K562 (cell line): ENCODE measurements at regions of chr6 and their contacts with region 1.

Region 1: DNA sequence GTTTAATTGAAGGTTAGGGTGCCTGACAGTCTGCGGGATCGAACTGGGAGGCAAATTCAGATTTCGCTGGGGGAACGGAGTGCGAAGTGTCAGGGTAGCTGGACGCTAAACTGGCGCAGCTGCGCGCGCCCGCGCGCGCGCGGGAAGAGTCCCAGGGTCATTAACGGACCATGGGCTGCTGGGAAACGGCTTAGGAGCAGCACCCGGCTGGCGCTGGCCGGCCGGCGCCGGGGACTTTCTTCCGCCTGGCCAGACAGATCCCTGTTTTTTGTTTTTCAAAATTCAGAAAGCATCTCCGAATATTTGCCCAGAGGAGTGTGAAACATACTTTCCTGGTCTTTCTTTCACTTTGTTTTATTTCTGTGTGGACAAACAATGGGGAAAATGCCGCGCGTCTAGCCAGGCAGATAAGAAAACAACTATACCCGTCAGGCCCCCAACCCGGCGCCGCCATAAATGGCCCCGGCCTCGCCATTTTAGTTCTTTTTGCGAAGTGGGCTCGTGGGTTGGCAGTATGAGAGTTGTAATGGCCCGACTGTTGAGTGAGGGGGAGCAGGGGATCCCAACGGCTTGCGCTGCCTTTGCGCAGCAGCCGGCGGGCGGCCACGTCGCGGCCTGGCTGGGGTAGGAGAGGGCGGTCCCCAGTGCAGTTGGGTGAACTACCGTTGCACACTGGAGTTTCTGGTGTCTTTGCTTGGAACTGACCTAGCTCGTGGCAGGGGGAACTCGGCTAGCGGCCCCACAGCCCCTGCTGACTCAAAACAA is 7.1 kb downstream of the HSPA1B start:
- DNase-seq: peak; percentile 88 to 99 (median 94)
- ATAC-seq: peak; percentile 79
- H3K4me3 ChIP-seq: peak overlapping the region; percentile 85
- H3K27ac ChIP-seq: peak overlapping the region; percentile 88
- H3K4me1 ChIP-seq: peaks cover 41 to 55% of the 10 kb centered on the region in 2 experiments
- H3K27me3 ChIP-seq: no peaks in the 10 kb centered on the region
- CTCF ChIP-seq: peak in 1 of 3 experiments; percentile 20; a peak in 1 of 6 replicates
- EP300 ChIP-seq: peak; percentile 83
- POLR2A ChIP-seq: peak; percentile 100
- RAD21 ChIP-seq: peak; percentile 1 to 33; a peak in 2 of 4 replicates

Region 2: GRCh38 chr6:31702819-31703522 is 131.6 kb before region 1 on chr6 and contains the start of gene ABHD16A:
- CTCF ChIA-PET with region 1: no interaction called
- POLR2A ChIA-PET with region 1: interaction called, 10 read pairs
- in situ Hi-C with region 1: no loop called
- intact Hi-C with region 1: no loop called
- DNase-seq: peak; percentile 100
- ATAC-seq: peak; percentile 95
- H3K4me3 ChIP-seq: peak within 1 kb of the TSS; percentile 68
- H3K27ac ChIP-seq: peak within 1 kb of the TSS; percentile 93
- H3K4me1 ChIP-seq: peaks cover 22 to 34% of the 10 kb centered on the region in 2 experiments
- H3K27me3 ChIP-seq: no peaks in the 10 kb centered on the region
- CTCF ChIP-seq: peak in 2 of 3 experiments; percentile 14 to 17; a peak in 1 of 6 replicates
- EP300 ChIP-seq: peak; percentile 73
- POLR2A ChIP-seq: peak; percentile 98
- RAD21 ChIP-seq: peak in 1 of 2 experiments; percentile 21; a peak in 1 of 4 replicates
- polyA plus RNA-seq, gene ABHD16A: 25.8 to 49.7 TPM

Region 3: GRCh38 chr6:31795616-31796298 is 38.9 kb before region 1 on chr6 and contains the start of gene VARS1:
- CTCF ChIA-PET with region 1: interaction called, 24 read pairs
- POLR2A ChIA-PET with region 1: interaction called, 13 read pairs
- in situ Hi-C with region 1: no loop called
- intact Hi-C with region 1: loop called (anchors 1 kb)
- DNase-seq: peak; percentile 99 to 100 (median 100)
- ATAC-seq: peak; percentile 92
- H3K4me3 ChIP-seq: peak within 1 kb of the TSS; percentile 61
- H3K27ac ChIP-seq: peak within 1 kb of the TSS; percentile 97
- H3K4me1 ChIP-seq: peaks cover 17 to 44% of the 10 kb centered on the region in 2 experiments
- H3K27me3 ChIP-seq: no peaks in the 10 kb centered on the region
- CTCF ChIP-seq: peak; percentile 99 to 100 (median 100)
- EP300 ChIP-seq: peak; percentile 59; the same call in 1 of the 2 replicates
- POLR2A ChIP-seq: peak; percentile 38; the same call in 1 of the 2 replicates
- RAD21 ChIP-seq: peak; percentile 99 to 100
- polyA plus RNA-seq, gene VARS1: 2.9 to 10.4 TPM

Region 4: DNA sequence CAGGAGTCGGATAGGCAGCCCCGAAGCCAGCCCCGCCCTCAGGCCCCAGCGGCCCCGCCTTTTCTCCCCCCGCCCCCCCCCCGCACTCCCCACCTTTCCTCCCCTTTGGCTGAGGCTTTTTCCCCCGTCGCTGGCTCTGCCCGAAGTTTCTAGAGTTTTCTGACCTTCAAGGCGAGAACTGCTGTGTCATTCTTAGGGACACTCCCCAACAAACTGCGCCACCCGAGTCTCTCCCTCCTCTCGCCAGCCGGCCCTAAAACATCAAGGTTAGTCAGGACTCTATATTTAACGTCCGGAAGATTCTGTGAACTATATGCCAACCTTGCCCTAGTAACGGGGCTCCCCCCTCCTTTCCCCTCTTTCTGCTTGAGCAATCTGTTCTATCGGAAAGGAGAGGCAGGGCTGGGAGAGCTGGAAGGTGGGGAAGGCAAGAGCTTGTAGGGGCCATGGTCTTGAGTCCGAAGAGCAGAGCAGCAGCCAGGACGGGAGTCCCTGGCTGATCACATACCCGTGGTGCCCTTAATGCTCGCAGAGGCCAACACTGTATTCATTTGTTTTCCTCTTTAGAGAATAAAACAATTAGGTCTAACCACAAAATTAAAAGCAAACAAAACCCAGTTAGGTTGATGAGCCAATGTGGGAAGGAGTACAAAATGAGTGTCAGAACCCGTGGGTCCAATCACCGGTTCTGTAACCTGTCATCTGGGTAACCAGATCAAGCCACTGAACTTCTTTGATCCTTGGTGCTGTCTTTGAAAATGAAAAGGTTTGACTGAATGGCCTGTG is 12.4 kb before region 1 on chr6:
- CTCF ChIA-PET with region 1: no interaction called
- POLR2A ChIA-PET with region 1: interaction called, 50 read pairs
- in situ Hi-C with region 1: no loop called
- intact Hi-C with region 1: no loop called
- DNase-seq: peak; percentile 95 to 100 (median 96)
- ATAC-seq: peak; percentile 77
- H3K4me3 ChIP-seq: peak overlapping the region; percentile 59
- H3K27ac ChIP-seq: peak overlapping the region; percentile 99
- H3K4me1 ChIP-seq: peaks cover 51 to 58% of the 10 kb centered on the region in 2 experiments
- H3K27me3 ChIP-seq: no peaks in the 10 kb centered on the region
- CTCF ChIP-seq: no peak; a peak in 1 of 6 replicates
- EP300 ChIP-seq: peak; percentile 77
- POLR2A ChIP-seq: peak; percentile 91
- RAD21 ChIP-seq: no peak; a peak in 1 of 4 replicates

Region 5: GRCh38 chr6:31901953-31902643 is 67.5 kb after region 1 on chr6 and contains the start of gene ZBTB12:
- CTCF ChIA-PET with region 1: no interaction called
- POLR2A ChIA-PET with region 1: interaction called, 10 read pairs
- in situ Hi-C with region 1: no loop called
- intact Hi-C with region 1: no loop called
- DNase-seq: peak; percentile 98
- ATAC-seq: peak; percentile 84
- H3K4me3 ChIP-seq: peak within 1 kb of the TSS; percentile 75
- H3K27ac ChIP-seq: peak within 1 kb of the TSS; percentile 84
- H3K4me1 ChIP-seq: peaks cover 31 to 36% of the 10 kb centered on the region in 2 experiments; a peak in 4 of 5 replicates
- H3K27me3 ChIP-seq: no peaks in the 10 kb centered on the region
- CTCF ChIP-seq: peak in 1 of 3 experiments; percentile 15; a peak in 1 of 6 replicates
- EP300 ChIP-seq: no peak
- POLR2A ChIP-seq: peak; percentile 72
- RAD21 ChIP-seq: peak; percentile 41 to 50
- polyA plus RNA-seq, gene ZBTB12: 0.03 TPM in 1 of 2 experiments, not detected in the other